ENCODE measurements at regions of chr10 and their contacts with region 1.

Region 1: DNA sequence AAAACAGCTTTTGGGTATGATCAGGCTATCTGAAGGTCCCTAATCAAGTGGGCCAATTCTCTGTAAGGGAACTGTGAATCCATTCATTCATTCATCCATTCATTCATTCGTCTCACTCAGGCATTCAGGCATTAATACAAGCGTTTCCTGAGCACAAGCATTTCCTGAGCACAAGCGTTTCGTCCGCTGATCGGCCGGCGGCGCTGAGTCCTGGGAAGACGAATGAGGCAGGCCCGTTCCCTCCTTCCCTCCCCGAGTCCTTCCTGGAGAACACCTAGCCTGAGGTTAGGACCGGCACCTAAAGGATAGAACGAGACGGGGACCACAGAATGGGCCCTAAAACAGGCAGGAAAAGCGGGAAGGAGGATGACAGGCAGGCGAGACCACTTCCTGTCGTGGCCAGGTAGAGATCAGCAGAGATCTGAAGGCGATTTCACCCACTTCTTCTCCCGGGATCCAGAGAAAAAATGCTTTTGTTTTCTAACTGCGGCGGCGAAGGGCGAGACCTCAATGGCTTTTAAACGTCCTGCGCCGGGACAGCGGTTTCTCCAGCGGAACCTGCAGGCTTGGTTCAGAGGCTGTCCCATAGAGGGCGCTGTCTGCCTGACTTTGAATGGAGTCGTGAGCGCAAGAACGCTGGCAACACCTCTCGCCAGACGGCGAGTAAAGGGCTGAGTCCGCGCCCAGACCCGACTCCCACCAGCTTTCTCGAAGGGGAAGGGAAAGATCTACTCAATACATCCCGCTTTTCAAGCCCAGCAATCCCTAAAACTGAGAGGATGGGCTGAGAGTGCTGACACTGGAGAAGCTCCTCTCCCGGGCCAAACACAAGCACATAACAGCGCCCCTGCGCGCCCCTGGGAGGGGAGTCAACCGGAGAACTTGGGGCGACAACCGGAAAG is 2.9 kb upstream of the HMX3 start:
- DNase-seq: peak; percentile 94
- ATAC-seq: peak; percentile 69
- H3K4me3 Mint-ChIP-seq: peak overlapping the region; percentile 59
- H3K27ac Mint-ChIP-seq: no peak overlapping the region
- H3K4me1 Mint-ChIP-seq: peaks cover 28% of the 10 kb centered on the region
- H3K27me3 Mint-ChIP-seq: peaks cover 61% of the 10 kb centered on the region

Region 2: DNA sequence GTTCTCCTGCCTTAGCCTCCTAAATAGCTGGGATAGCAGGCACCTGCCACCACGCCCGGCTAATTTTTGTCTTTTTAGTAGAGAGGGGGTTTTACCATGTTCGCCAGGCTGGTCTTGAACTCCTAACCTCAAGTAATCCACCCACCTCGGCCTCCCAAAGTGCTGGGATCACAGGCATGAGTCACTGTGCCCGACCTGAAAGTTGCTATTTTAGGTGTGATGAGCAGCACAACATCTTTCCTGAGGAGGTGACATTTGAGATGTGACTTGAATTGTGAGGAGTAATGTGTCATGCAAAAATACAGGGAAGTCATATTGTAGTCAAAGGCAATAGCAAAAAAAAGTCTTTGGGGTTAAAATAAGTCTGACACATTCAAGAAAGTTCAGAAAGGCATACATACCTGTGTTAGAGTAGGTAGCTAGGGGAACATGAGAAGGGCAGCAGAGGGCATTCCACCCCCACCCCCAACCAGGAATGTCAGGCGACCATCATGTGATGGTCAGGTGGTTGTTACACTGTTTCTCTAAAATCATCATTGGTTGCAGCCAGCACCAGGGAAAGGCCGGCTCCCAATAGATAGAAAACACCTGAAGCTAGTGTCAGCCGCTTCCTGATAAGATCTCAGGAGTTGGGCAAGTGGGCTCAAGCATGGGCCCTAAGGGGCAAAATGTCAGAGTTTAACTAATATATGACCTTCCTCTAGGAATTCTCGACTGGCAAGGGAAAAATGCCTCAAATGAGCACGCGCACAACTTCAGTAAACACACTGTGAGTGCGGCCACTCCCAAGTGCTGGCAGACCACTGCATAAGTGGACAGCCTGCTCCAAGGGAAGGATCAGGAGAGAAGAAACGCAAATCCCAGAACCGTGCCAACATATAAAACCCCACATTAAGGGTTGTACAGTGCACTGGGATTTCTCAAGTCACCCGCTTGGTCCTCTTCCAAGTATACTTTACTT is 1144.2 kb before region 1 on chr10 and contains the start of gene TACC2:
- CTCF ChIA-PET with region 1: no interaction called
- POLR2A ChIA-PET with region 1: no interaction called
- intact Hi-C with region 1: no loop called
- DNase-seq: peak; percentile 36
- ATAC-seq: peak; percentile 78
- H3K4me3 Mint-ChIP-seq: no peak within 1 kb of the TSS
- H3K27ac Mint-ChIP-seq: no peak within 1 kb of the TSS
- H3K4me1 Mint-ChIP-seq: peaks cover 8% of the 10 kb centered on the region
- H3K27me3 Mint-ChIP-seq: peaks cover 16% of the 10 kb centered on the region
- total RNA-seq, gene TACC2: not detected

Region 3: GRCh38 chr10:123043409-123043925 is 89.4 kb before region 1 on chr10:
- CTCF ChIA-PET with region 1: interaction called, 5 read pairs
- POLR2A ChIA-PET with region 1: no interaction called
- intact Hi-C with region 1: loop called (anchors 1 to 2 kb)
- DNase-seq: peak; percentile 61
- ATAC-seq: peak; percentile 83
- H3K4me3 Mint-ChIP-seq: no peak overlapping the region
- H3K27ac Mint-ChIP-seq: no peak overlapping the region
- H3K4me1 Mint-ChIP-seq: peaks cover 9% of the 10 kb centered on the region
- H3K27me3 Mint-ChIP-seq: no peaks in the 10 kb centered on the region

Region 4: GRCh38 chr10:123069246-123069986 is 63.4 kb before region 1 on chr10:
- CTCF ChIA-PET with region 1: no interaction called
- POLR2A ChIA-PET with region 1: no interaction called
- intact Hi-C with region 1: no loop called
- DNase-seq: no peak
- ATAC-seq: no peak
- H3K4me3 Mint-ChIP-seq: no peak overlapping the region
- H3K27ac Mint-ChIP-seq: no peak overlapping the region
- H3K4me1 Mint-ChIP-seq: no peaks in the 10 kb centered on the region
- H3K27me3 Mint-ChIP-seq: peaks cover 27% of the 10 kb centered on the region

Region 5: DNA sequence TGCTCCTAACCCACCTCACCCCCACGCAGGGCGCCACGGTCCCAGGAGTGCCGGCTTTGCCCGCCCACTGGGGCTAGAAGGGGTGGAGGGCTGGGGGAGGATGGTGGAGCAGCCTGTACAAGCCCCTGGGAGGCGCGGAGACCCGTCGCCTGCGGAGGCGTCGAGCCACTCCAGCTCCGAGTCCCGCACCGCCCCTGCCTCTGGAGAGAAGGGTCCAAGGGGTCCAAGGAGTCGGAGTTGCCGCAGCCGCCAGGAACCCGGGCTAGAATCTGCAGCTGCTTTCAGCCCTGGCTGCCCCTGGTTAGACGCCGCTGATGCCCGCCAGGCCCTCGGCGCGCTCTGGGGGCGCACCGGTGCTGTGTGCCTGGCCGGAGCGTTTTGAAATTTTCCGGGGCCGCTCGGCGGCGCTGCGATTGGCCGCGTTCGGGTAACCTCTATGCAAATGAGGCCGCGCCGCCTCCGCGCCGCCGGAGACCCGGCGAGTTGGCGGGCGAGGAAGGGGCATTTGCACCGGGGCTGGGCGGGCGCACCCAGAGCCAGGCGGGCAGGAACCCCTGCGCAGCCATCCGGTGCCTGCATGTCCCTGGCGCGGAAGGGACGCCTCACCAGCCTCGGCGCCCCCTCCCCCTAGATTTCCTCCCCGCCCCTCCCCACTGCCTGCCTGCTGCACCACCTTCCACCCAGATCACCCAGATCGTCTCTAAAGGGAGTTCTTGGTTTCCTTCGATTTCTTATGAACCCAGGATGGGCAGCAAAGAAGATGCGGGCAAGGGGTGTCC is 15.0 kb after region 1 on chr10 and contains the start of gene HMX2:
- CTCF ChIA-PET with region 1: interaction called, 10 read pairs
- POLR2A ChIA-PET with region 1: interaction called, 4 read pairs
- intact Hi-C with region 1: loop called (anchors 1 to 2 kb)
- DNase-seq: peak; percentile 73
- ATAC-seq: peak; percentile 16
- H3K4me3 Mint-ChIP-seq: peak within 1 kb of the TSS; percentile 60
- H3K27ac Mint-ChIP-seq: no peak within 1 kb of the TSS
- H3K4me1 Mint-ChIP-seq: peaks cover 69% of the 10 kb centered on the region
- H3K27me3 Mint-ChIP-seq: peaks cover 54% of the 10 kb centered on the region
- total RNA-seq, gene HMX2: 0.18 to 0.28 TPM

Region 6: GRCh38 chr10:123165445-123166072 is 32.7 kb after region 1 on chr10:
- CTCF ChIA-PET with region 1: no interaction called
- POLR2A ChIA-PET with region 1: no interaction called
- intact Hi-C with region 1: no loop called
- DNase-seq: no peak
- ATAC-seq: no peak
- H3K4me3 Mint-ChIP-seq: no peak overlapping the region
- H3K27ac Mint-ChIP-seq: no peak overlapping the region
- H3K4me1 Mint-ChIP-seq: peaks cover 24% of the 10 kb centered on the region
- H3K27me3 Mint-ChIP-seq: no peaks in the 10 kb centered on the region

Region 7: DNA sequence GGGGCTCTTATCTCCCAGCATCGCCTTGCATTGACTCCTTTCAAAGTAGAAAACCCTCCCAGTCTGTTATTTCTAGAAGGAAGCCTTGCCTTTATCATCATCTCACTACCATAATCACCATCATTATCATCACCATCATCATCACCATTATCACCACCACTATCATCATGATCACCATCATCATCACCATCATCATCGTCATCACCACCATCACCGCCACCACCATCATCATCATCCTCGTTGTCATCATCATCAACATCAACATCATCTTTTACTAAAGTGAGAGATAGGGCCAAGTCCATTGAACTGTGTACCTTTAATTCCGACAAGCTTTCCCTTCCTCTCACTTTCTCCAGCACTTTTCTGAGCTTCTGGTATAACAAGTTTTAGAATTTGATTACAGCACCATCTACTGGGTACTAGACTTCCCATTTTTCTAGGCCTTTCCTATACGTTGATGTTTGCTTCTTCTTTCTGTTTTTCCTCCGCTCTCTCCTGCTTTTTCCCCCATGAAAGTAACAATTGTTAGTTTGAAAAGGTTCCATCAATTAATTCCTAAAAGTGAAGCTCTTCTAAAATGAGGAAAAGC is 247.8 kb after region 1 on chr10:
- CTCF ChIA-PET with region 1: interaction called, 11 read pairs
- POLR2A ChIA-PET with region 1: no interaction called
- intact Hi-C with region 1: loop called (anchors 1 to 2 kb)
- DNase-seq: no peak
- ATAC-seq: no peak
- H3K4me3 Mint-ChIP-seq: no peak overlapping the region
- H3K27ac Mint-ChIP-seq: no peak overlapping the region
- H3K4me1 Mint-ChIP-seq: no peaks in the 10 kb centered on the region
- H3K27me3 Mint-ChIP-seq: peaks cover 6% of the 10 kb centered on the region

Region 8: DNA sequence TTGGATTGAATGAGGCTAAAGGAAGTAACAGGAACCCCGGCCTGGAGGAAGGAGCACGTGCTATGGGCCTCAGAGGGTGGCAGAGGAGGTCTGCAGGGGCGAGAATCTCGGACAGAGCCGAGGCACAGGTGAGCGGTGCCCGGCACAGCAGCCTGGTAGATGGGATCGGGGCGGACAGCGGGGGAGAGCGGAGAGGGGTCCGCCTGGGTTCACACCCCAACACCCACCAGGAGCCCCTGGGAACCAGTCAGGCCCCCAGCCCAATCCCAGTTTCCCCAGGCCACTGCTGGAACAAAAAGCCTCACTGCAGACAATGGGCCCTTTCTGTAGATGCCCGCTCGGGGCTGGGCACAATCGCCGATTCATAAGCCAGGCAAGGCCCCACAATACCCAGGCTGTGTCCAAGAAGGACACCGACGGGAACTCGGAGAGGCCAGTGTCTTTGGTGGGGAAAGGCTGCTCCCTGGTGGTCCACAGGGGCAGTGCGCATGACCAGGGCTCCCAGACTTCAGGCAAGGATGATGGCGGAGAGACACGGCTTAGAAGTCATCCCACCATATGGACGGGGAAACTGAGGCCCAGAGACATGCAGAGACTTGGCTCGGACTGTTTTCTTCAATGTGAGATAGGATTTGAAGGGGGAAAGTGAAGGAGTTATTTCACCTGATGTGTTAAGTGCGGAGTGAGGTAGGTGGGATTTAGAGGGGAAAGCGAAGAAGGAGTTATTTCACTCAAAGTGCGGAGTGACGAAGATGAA is 426.4 kb after region 1 on chr10:
- CTCF ChIA-PET with region 1: interaction called, 4 read pairs
- POLR2A ChIA-PET with region 1: no interaction called
- intact Hi-C with region 1: loop called (anchors 1 kb)
- DNase-seq: peak; percentile 79
- ATAC-seq: peak; percentile 70
- H3K4me3 Mint-ChIP-seq: no peak overlapping the region
- H3K27ac Mint-ChIP-seq: no peak overlapping the region
- H3K4me1 Mint-ChIP-seq: no peaks in the 10 kb centered on the region
- H3K27me3 Mint-ChIP-seq: peaks cover 15% of the 10 kb centered on the region

Region 9: DNA sequence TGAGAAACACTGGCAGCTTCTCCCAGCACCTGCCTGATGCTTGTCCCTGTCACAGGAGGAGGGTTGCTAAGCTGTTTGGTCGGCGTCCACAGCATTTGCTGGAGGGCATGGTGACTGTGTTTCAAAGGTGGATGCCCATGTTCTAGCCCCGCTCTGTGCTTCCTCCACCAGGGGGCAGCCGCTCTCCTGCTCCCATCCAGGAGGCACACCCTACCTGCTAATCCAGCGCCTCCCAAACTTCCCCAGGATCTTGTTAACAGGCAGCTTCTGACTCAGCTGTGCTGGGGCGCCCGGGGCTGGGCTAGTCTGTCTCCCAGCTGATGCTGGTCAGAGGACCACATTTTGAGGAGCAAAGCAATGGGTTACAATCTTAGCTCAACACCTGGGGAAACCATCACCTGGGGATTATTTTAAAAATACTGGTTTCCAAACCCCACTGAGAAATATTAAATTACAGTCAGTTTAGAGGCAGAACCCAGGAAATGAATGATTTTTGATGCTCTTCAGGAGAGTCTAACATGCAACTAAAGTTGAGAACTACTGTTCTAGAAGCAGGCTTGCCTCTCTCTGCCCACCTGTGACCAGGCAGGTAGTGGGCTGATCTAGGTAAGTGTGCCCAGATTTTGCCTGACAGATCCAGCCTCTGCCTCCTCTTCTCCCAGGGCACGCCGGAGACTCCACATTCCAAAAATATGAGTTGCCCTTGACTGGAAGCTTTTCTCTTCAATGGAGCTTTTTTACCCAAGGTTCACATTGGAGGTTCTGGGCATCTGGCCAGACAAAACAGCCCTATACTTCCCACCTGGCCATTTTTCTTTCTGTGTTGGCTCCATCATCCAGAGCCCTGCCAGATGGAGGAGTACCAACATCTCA is 440.6 kb after region 1 on chr10:
- CTCF ChIA-PET with region 1: no interaction called
- POLR2A ChIA-PET with region 1: no interaction called
- intact Hi-C with region 1: no loop called
- DNase-seq: peak; percentile 70
- ATAC-seq: peak; percentile 55
- H3K4me3 Mint-ChIP-seq: no peak overlapping the region
- H3K27ac Mint-ChIP-seq: no peak overlapping the region
- H3K4me1 Mint-ChIP-seq: no peaks in the 10 kb centered on the region
- H3K27me3 Mint-ChIP-seq: peaks cover 31% of the 10 kb centered on the region

Region 10: DNA sequence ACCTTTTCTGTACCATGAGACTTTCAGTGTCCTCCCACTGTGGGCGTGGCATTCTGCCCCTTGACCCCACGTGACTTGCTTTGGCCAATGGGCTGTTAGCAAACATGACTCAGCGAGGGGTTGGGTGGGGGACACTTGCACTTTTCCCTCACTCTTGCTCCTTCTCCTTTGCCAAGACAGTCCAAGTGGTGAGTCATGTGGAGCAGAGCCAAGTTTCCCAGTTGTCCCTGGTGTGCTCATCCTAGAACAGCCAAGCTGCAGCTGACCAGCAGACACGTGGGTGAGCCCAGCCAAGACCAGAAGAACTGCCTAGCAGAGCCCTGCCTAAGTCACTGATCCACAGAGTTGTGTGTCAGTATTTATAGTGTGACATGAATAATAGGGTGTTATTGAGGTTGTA is 841.6 kb after region 1 on chr10:
- CTCF ChIA-PET with region 1: no interaction called
- POLR2A ChIA-PET with region 1: no interaction called
- intact Hi-C with region 1: loop called in 1 of 2 experiments (anchors 10 kb)
- DNase-seq: no peak
- ATAC-seq: no peak
- H3K4me3 Mint-ChIP-seq: no peak overlapping the region
- H3K27ac Mint-ChIP-seq: no peak overlapping the region
- H3K4me1 Mint-ChIP-seq: peaks cover 3% of the 10 kb centered on the region
- H3K27me3 Mint-ChIP-seq: peaks cover 68% of the 10 kb centered on the region

Region 11: DNA sequence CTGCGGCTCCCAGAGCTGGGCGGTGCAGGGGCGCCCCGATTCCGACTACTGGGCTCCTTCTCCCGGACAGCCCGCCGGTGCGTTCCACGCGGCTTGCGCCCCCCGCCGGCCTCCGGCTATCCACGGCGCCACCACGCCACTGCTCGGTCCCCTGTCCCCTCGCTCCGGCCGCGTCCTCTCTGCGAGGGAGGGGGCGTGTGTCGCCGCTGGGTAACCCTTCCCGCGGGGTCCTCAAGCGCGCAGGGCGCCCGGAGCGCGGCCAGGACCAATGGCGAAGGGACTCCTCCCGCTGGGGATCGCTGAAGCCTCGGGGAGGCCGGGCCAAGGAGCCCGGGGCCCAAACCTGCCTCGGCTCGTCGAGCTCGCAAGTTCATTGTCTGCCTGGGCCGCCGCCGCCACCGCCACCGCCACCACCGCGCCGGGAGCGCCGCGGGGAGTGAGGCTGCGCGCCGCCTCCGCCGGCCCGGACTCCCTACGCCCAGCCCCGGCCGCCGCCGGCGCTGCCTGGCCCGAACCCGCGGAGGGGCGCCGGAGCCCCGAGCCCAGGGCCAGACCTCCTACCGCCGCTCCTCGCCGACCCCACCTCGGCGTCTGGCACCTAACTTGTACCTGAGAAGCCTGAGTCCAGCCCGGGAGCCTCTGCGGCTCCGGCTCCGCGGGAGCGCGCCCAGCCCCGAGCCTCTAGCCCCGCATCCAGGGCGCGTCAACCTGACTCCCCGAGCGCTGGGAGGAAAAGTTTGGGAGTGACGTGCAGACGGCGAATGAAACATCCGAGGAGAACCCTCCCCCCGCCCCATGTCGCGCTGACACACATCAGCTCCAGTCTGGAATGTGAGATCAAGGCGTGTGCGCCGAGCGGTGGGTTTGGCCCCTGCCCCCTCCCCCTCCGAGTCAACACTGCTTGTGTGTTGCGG is 960.3 kb after region 1 on chr10 and contains the start of gene CHST15:
- CTCF ChIA-PET with region 1: no interaction called
- POLR2A ChIA-PET with region 1: no interaction called
- intact Hi-C with region 1: loop called in 1 of 2 experiments (anchors 5 kb)
- DNase-seq: peak; percentile 18
- ATAC-seq: peak; percentile 14
- H3K4me3 Mint-ChIP-seq: peak within 1 kb of the TSS; percentile 54
- H3K27ac Mint-ChIP-seq: no peak within 1 kb of the TSS
- H3K4me1 Mint-ChIP-seq: peaks cover 2% of the 10 kb centered on the region
- H3K27me3 Mint-ChIP-seq: peaks cover 51% of the 10 kb centered on the region
- total RNA-seq, gene CHST15: 0.40 to 0.43 TPM

Measured in activated CD4-positive, alpha-beta T cell treated with anti-CD3 and anti-CD28 coated beads for 36 hours (primary cell).